ENCODE measurements at regions of chr2 and their contacts with region 1.

Region 1: DNA sequence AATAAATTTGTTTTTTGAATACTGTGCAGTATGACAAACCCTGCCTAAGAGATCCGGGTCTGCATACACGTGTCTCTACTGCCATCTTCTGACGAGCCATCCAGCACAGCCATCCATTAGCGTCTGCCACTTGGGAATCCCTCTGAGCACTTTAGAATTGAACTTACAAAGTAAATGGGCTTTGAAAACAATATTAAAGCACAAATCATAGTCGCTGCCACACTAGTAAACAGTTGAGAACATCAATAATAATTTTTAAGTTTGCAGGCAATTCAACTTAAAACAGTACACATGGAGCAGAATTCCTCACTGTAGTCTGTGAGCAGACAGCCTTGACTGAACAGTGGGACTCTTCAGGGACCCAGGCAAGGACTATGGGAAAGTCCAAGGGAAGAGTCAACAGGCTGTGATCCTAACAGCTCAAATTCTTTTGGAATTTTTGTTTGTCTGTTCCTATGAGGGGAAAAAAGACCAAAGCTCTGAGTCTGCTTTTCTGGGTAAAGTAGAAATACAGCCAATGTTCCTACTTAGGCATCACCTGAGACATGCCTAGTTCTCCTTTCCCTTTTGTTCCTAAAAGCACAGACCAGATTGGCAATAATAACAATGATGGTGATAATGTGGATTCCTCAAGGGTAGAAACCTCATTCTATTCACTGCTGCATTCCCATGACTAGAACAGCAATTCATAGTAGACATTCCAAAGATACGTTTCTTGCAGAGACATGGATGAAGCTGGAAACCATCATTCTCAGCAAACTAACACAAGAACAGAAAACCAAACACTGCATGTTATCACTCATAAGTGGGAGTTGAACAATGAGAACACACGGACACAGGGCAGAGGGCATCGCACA is 92.9 kb downstream of the MREG start:
- DNase-seq: peak; percentile 76
- ATAC-seq: peak; percentile 85
- H3K4me3 Mint-ChIP-seq: no peak overlapping the region
- H3K27ac Mint-ChIP-seq: no peak overlapping the region
- H3K4me1 Mint-ChIP-seq: peaks cover 3% of the 10 kb centered on the region
- H3K27me3 Mint-ChIP-seq: peaks cover 2% of the 10 kb centered on the region

Region 2: GRCh38 chr2:215454519-215455246 is 465.8 kb before region 1 on chr2:
- CTCF ChIA-PET with region 1: no interaction called
- POLR2A ChIA-PET with region 1: no interaction called
- intact Hi-C with region 1: loop called (anchors 1 kb)
- DNase-seq: no peak
- ATAC-seq: peak; percentile 51
- H3K4me3 Mint-ChIP-seq: no peak overlapping the region
- H3K27ac Mint-ChIP-seq: no peak overlapping the region
- H3K4me1 Mint-ChIP-seq: no peaks in the 10 kb centered on the region
- H3K27me3 Mint-ChIP-seq: peaks cover 18% of the 10 kb centered on the region

Region 3: DNA sequence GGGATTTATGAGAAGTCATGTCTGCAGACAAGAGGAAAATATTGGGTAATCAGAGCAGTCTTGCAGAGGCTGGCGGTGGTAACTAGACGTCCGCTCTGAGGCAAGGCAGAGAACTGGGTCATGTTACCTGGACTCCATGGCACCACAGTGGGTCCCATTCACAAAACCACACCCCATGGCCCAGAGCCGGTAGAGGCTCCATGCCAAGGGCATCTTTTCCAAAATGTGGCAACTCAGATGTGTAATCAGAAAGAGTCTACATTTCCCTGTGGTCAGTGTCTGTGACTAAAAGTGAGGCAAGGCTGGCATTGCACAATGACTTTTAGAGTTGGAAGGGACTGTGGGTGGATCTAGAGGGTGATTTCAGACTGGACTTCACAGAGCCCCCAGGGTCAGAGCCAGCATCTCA is 20.3 kb before region 1 on chr2:
- CTCF ChIA-PET with region 1: no interaction called
- POLR2A ChIA-PET with region 1: no interaction called
- intact Hi-C with region 1: no loop called
- DNase-seq: no peak
- ATAC-seq: no peak
- H3K4me3 Mint-ChIP-seq: no peak overlapping the region
- H3K27ac Mint-ChIP-seq: no peak overlapping the region
- H3K4me1 Mint-ChIP-seq: peaks cover 3% of the 10 kb centered on the region
- H3K27me3 Mint-ChIP-seq: peaks cover 3% of the 10 kb centered on the region

Measured in activated CD4-positive, alpha-beta T cell treated with anti-CD3 and anti-CD28 coated beads for 36 hours (primary cell).